Activated CD8-positive, alpha-beta memory T cell treated with anti-CD3 and anti-CD28 coated beads, Interleukin-2, amount 10 ng/mL, durations not matched to agents 7 days and 5 days (primary cell): ENCODE measurements at regions of chr1 and their contacts with region 1.

Region 1: DNA sequence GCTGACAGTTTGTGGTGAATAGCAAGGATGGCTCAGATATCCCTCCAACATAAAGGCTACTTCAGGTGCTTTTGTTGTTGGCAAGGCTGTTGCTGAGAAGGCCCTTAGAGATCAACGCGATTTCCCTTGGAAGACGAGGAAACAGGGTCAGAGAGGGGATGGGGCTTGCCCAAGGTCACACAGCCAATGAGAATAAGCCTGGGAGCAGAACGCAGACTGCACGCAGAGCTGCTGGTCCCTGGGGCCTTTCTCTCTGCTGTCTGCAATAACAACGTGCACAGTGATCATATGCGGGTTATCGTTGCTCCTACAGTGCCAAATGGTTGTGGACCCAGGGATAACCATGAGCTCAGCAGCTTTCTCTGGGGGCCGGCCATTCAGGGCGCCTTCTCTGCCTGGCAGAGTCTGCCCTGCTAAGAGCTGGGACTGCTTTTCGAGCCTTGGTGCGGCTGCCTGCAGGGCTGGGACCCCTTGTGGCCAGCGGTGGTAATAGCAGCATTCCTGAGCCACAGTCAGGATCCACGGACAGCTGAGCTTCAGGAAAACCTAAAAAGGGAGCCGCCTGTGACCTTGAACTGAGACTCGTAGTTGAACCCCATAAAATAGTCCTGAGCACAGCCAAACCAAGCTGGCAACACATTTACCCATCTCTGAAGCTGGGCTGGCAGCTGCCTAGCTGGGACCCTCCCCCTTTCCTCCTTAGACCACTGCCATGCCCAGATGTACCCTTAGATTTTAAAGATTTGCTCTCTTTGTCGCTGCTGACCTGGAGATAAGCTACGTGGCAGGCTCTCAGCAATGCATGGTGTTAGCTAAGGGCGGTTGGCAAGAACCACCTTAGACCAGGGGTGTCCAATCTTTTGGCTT is 39.8 kb downstream of the HTR6 start:
- DNase-seq: peak; percentile 61
- ATAC-seq: peak; percentile 53
- H3K4me3 Mint-ChIP-seq: no peak overlapping the region
- H3K27ac Mint-ChIP-seq: no peak overlapping the region
- H3K4me1 Mint-ChIP-seq: peaks cover 19% of the 10 kb centered on the region
- H3K27me3 Mint-ChIP-seq: no peaks in the 10 kb centered on the region

Region 2: GRCh38 chr1:19694298-19694697 is 10.2 kb before region 1 on chr1:
- CTCF ChIA-PET with region 1: interaction called, 15 read pairs
- DNase-seq: no peak
- ATAC-seq: no peak
- H3K4me3 Mint-ChIP-seq: no peak overlapping the region
- H3K27ac Mint-ChIP-seq: no peak overlapping the region
- H3K4me1 Mint-ChIP-seq: peaks cover 6% of the 10 kb centered on the region
- H3K27me3 Mint-ChIP-seq: no peaks in the 10 kb centered on the region

Region 3: GRCh38 chr1:19715334-19716203 is 11.1 kb after region 1 on chr1:
- CTCF ChIA-PET with region 1: interaction called, 26 read pairs
- DNase-seq: peak; percentile 90
- ATAC-seq: peak; percentile 91
- H3K4me3 Mint-ChIP-seq: no peak overlapping the region
- H3K27ac Mint-ChIP-seq: no peak overlapping the region
- H3K4me1 Mint-ChIP-seq: peaks cover 22% of the 10 kb centered on the region
- H3K27me3 Mint-ChIP-seq: no peaks in the 10 kb centered on the region